ENCODE measurements at regions of chr5 and their contacts with region 1.

Region 1: GRCh38 chr5:43556857-43557542 is at the start of gene PAIP1:
- DNase-seq: peak; percentile 79
- H3K4me3 ChIP-seq: peak within 1 kb of the TSS; percentile 78
- H3K27ac ChIP-seq: peak within 1 kb of the TSS; percentile 99
- H3K4me1 ChIP-seq: peaks cover 15% of the 10 kb centered on the region
- H3K27me3 ChIP-seq: no peaks in the 10 kb centered on the region
- CTCF ChIP-seq: peak; percentile 70
- total RNA-seq, gene PAIP1: 53.1 to 65.6 TPM

Region 2: GRCh38 chr5:43602461-43603343 is 45.7 kb after region 1 on chr5 and contains the start of gene NNT:
- intact Hi-C with region 1: loop called (anchors 5 kb)
- DNase-seq: peak; percentile 85
- H3K4me3 ChIP-seq: peak within 1 kb of the TSS; percentile 67
- H3K27ac ChIP-seq: peak within 1 kb of the TSS; percentile 77
- H3K4me1 ChIP-seq: peaks cover 4% of the 10 kb centered on the region
- H3K27me3 ChIP-seq: no peaks in the 10 kb centered on the region
- CTCF ChIP-seq: no peak
- total RNA-seq, gene NNT: 81.3 to 148 TPM